ENCODE measurements at regions of chr17 and their contacts with region 1.

Region 1: GRCh38 chr17:42276359-42276608 is at the start of gene STAT5B:
- DNase-seq: peak; percentile 56 to 81 (median 73)
- H3K4me3 ChIP-seq: peak within 1 kb of the TSS; percentile 75
- H3K4me3 Mint-ChIP-seq: peak within 1 kb of the TSS; percentile 93 to 99 (median 98)
- H3K27ac ChIP-seq: peak within 1 kb of the TSS; percentile 85
- H3K27ac Mint-ChIP-seq: peak within 1 kb of the TSS; percentile 94 to 99 (median 97)
- H3K4me1 ChIP-seq: peaks cover 47% of the 10 kb centered on the region
- H3K4me1 Mint-ChIP-seq: peaks cover 45 to 53% (median 49%) of the 10 kb centered on the region in 3 donors
- H3K27me3 ChIP-seq: no peaks in the 10 kb centered on the region
- H3K27me3 Mint-ChIP-seq: no peaks in the 10 kb centered on the region
- total RNA-seq, gene STAT5B: 124 to 132 TPM

Region 2: DNA sequence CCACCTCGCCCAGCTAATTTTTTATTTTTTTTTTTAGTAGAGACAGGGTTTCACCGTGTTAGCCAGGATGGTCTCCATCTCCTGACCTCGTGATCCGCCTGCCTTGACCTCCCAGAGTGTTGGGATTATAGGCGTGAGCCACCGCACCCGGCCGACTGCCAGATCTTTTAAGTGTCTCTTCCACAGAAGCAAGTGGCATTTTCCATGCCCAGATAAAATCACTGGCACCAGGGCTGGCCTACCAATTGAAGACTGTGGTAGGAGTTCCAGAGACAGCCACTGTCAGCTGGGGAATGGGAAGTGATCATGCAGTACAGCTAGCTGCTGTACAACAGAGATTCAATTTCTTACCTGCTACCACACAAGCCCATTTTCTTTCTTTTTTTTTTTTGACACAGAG is 291.8 kb before region 1 on chr17:
- CTCF ChIA-PET with region 1: no interaction called
- POLR2A ChIA-PET with region 1: interaction called, 12 read pairs
- DNase-seq: no peak
- H3K4me3 ChIP-seq: no peak overlapping the region
- H3K4me3 Mint-ChIP-seq: no peak overlapping the region
- H3K27ac ChIP-seq: no peak overlapping the region
- H3K27ac Mint-ChIP-seq: peak overlapping the region in 1 of 8 donors; percentile 9
- H3K4me1 ChIP-seq: no peaks in the 10 kb centered on the region
- H3K4me1 Mint-ChIP-seq: no peaks in the 10 kb centered on the region
- H3K27me3 ChIP-seq: no peaks in the 10 kb centered on the region
- H3K27me3 Mint-ChIP-seq: peaks cover 0 to 1% of the 10 kb centered on the region in 2 donors

Region 3: GRCh38 chr17:42174126-42174783 is 102.0 kb before region 1 on chr17:
- CTCF ChIA-PET with region 1: no interaction called
- POLR2A ChIA-PET with region 1: no interaction called
- DNase-seq: no peak
- H3K4me3 ChIP-seq: no peak overlapping the region
- H3K4me3 Mint-ChIP-seq: no peak overlapping the region
- H3K27ac ChIP-seq: no peak overlapping the region
- H3K27ac Mint-ChIP-seq: no peak overlapping the region
- H3K4me1 ChIP-seq: peaks cover 3% of the 10 kb centered on the region
- H3K4me1 Mint-ChIP-seq: peaks cover 9 to 13% (median 9%) of the 10 kb centered on the region in 3 donors
- H3K27me3 ChIP-seq: no peaks in the 10 kb centered on the region
- H3K27me3 Mint-ChIP-seq: peaks cover 6 to 10% of the 10 kb centered on the region in 2 donors

Region 4: DNA sequence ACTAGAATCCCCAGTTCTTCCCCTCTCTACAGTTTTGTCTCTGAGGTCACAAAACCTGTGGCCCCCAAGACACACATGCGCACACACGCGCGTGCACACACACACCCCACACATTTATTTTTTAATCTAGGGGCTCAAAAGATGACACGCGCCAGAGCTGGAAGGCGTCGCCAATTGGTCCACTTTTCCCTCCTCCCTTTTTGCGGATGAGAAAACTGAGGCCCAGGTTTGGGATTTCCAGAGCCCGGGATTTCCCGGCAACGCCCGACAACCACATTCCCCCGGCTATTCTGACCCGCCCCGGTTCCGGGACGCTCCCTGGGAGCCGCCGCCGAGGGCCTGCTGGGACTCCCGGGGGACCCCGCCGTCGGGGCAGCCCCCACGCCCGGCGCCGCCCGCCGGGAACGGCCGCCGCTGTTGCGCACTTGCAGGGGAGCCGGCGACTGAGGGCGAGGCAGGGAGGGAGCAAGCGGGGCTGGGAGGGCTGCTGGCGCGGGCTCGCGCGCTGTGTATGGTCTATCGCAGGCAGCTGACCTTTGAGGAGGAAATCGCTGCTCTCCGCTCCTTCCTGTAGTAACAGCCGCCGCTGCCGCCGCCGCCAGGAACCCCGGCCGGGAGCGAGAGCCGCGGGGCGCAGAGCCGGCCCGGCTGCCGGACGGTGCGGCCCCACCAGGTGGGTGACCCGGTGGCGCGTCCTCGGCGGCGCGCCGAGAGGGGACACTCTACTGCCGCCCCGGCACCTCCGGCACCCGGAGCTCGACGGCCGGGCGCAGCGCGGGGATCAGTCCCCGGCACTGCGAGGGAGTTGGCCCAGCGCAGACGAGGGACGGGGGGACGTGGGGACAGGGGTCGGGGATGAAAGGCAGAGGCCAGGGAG is 11.9 kb after region 1 on chr17 and contains the start of gene STAT5A:
- CTCF ChIA-PET with region 1: interaction called, 3 read pairs
- POLR2A ChIA-PET with region 1: interaction called, 42 read pairs
- DNase-seq: peak; percentile 72 to 91 (median 83)
- H3K4me3 ChIP-seq: peak within 1 kb of the TSS; percentile 65
- H3K4me3 Mint-ChIP-seq: peak within 1 kb of the TSS; percentile 93 to 97 (median 96)
- H3K27ac ChIP-seq: peak within 1 kb of the TSS; percentile 88
- H3K27ac Mint-ChIP-seq: peak within 1 kb of the TSS; percentile 95 to 99 (median 99)
- H3K4me1 ChIP-seq: peaks cover 30% of the 10 kb centered on the region
- H3K4me1 Mint-ChIP-seq: peaks cover 42 to 67% (median 52%) of the 10 kb centered on the region in 3 donors
- H3K27me3 ChIP-seq: no peaks in the 10 kb centered on the region
- H3K27me3 Mint-ChIP-seq: no peaks in the 10 kb centered on the region
- total RNA-seq, gene STAT5A: 259 to 263 TPM

Region 5: DNA sequence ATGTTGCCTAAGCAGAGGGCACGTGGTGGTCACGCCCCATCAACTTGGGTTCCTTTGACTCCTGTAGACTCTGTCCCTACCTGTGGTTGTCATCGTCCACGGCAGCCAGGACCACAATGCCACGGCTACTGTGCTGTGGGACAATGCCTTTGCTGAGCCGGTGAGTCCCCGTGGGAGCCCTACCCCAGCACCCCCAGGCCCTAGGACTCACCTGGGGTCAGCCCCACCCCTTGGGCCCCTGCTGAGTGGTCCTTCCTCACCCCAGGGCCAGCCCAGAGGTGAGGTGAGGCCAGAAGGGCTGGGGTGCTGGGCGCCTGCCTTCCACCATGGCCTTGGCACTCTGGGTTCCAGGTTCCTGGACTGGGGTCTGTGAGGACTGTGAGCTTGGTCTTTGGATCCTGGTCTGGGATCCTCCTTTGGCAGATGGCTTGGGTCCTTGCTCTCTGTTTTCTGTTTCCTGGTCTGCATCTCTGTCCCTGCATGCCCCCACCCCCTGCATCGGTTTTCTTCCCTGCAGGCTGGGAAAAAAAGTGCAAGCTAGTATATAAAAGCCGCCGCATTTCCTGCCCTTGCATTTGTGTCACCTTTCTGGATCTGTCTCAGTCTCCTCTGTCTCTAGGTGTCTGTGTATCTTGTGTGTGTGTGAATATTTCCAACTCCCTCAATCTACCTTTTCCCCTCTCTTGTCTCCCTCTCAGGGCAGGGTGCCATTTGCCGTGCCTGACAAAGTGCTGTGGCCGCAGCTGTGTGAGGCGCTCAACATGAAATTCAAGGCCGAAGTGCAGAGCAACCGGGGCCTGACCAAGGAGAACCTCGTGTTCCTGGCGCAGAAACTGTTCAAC is 29.5 kb after region 1 on chr17:
- CTCF ChIA-PET with region 1: no interaction called
- POLR2A ChIA-PET with region 1: no interaction called
- DNase-seq: peak in 1 of 5 donors; percentile 28
- H3K4me3 ChIP-seq: no peak overlapping the region
- H3K4me3 Mint-ChIP-seq: no peak overlapping the region
- H3K27ac ChIP-seq: no peak overlapping the region
- H3K27ac Mint-ChIP-seq: peak overlapping the region in 4 of 8 donors; percentile 31 to 78 (median 55)
- H3K4me1 ChIP-seq: peaks cover 5% of the 10 kb centered on the region
- H3K4me1 Mint-ChIP-seq: peaks cover 1 to 8% (median 2%) of the 10 kb centered on the region in 3 donors
- H3K27me3 ChIP-seq: no peaks in the 10 kb centered on the region
- H3K27me3 Mint-ChIP-seq: no peaks in the 10 kb centered on the region

Measured in CD8-positive, alpha-beta memory T cell (primary cell).